WTC11 (cell line): ENCODE measurements at regions of chr13 and their contacts with region 1.

Region 1: DNA sequence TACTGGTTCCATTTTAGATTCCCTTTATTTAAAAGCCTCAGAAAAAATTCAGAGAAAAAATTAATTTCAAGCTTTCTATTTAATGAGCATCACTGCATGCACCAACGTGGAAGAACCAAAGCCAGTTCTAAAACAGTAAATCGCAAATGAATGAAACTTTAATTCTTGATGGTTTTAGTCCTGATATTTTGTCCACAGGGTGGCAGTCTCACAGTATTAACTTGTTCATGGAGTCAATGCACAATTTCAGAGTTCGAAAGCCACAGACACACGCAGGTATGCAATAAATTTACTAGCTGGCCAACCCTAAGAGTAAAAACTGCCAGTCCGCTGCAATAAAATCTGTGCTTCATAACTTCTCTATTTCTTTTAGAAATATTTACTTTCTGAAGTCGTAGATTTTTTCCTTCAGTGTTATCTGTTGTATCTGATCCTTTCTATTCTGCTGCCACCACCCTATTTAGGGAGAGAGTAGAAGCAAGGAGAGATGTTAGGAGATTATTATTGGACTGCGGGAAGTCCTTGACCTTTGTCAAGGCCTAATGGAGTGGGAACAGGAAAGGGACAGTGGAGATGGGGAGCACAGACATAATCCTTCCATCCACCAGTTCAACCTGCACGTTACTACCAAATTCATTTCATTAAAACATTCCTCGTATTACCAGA is 7.0 kb upstream of the WBP4 start:
- DNase-seq: no peak
- ATAC-seq: peak; percentile 26
- H3K4me3 Mint-ChIP-seq: no peak overlapping the region
- H3K27ac Mint-ChIP-seq: 0 out of 2 replicates have a peak overlapping the region, but pooled peaks have one; percentile 18
- H3K4me1 Mint-ChIP-seq: peaks cover 25% of the 10 kb centered on the region
- H3K27me3 Mint-ChIP-seq: no peaks in the 10 kb centered on the region
- CTCF ChIP-seq: no peak

Region 2: GRCh38 chr13:41196620-41197019 is 142.3 kb after region 1 on chr13:
- CTCF ChIA-PET with region 1: interaction called, 11 read pairs
- POLR2A ChIA-PET with region 1: no interaction called
- DNase-seq: no peak
- ATAC-seq: no peak
- H3K4me3 Mint-ChIP-seq: no peak overlapping the region
- H3K27ac Mint-ChIP-seq: no peak overlapping the region
- H3K4me1 Mint-ChIP-seq: peaks cover 21% of the 10 kb centered on the region
- H3K27me3 Mint-ChIP-seq: peaks cover 5% of the 10 kb centered on the region
- CTCF ChIP-seq: no peak